ENCODE measurements at regions of chr2 and their contacts with region 1.

Region 1: GRCh38 chr2:223692191-223692947 is 90.2 kb upstream of the SCG2 start:
- DNase-seq: no peak
- ATAC-seq: peak; percentile 53

Region 2: DNA sequence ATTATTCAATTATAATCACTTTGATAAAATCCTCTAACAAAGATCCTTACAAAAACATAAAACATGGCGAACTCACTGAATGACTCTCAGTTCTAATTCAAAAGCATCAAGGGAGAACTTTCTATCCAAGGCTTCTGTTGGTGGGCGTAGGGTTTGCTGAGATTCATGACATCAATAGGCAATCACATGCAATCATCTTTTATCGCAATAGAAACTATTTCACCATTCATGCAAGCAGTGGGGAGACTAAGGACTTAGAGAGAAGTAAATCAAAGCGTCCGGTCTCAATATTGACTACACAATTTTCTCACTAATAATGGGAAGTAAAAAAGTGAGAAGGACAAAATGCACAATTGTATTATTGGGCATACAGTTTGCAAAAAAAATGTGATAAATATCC is 258.9 kb before region 1 on chr2:
- intact Hi-C with region 1: no loop called
- DNase-seq: no peak
- ATAC-seq: no peak

Region 3: GRCh38 chr2:223580951-223581350 is 111.4 kb before region 1 on chr2:
- intact Hi-C with region 1: no loop called
- DNase-seq: no peak
- ATAC-seq: peak; percentile 52

Region 4: DNA sequence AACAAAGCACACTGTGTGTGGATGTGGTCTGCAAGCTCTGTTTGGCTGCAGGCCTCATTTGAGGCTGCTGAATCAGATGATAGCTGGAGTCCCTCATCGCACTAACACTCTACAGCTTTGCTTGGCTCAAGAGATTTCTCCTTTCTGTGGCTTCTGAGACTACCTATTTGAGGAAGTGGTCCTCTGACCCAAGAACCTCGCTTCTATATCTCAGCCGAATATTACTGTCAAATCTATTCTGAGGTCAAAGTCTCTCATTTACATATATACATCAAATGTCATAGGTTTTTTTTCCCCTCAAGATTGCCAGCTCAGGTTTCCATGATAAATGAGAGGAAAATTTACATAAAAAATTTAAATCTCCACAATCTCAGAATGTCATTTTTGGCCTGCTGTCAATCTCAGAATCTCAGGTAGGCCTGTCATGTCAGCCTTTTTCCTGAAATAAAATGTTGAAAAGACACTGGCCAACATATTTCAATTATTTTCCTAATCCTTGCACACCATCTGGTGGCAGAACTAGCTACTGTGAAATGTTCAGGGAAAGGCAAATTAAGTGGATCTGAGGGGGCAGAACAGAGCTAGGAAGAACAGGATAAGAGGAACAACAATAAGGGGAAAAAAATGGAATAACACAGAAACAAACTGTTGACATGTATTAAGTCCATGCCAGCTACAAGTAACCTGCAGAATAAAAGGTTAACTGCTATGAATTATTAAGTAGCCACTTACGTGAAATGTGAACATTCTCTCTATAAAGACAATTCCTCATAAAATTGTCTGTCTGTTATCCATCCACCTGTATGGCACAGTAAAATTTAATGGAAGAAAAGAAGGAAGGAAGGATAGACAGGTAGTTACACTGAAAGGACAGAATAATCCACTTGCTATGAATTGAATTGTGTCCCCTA is 105.7 kb after region 1 on chr2:
- intact Hi-C with region 1: loop called (anchors 10 kb)
- DNase-seq: no peak
- ATAC-seq: peak; percentile 51